B cell (primary cell): ENCODE measurements at regions of chr21 and their contacts with region 1.

Region 1: GRCh38 chr21:33542640-33543504 is at the start of gene SON:
- DNase-seq: peak; percentile 98
- ATAC-seq: peak; percentile 88
- H3K4me3 ChIP-seq: peak within 1 kb of the TSS; percentile 69 to 99 (median 89)
- H3K4me3 Mint-ChIP-seq: peak within 1 kb of the TSS; percentile 97
- H3K27ac ChIP-seq: peak within 1 kb of the TSS; percentile 96 to 99
- H3K27ac Mint-ChIP-seq: peak within 1 kb of the TSS; percentile 99
- H3K4me1 ChIP-seq: peaks cover 17 to 31% of the 10 kb centered on the region in 2 donors
- H3K4me1 Mint-ChIP-seq: peaks cover 43% of the 10 kb centered on the region
- H3K27me3 ChIP-seq: no peaks in the 10 kb centered on the region
- H3K27me3 Mint-ChIP-seq: no peaks in the 10 kb centered on the region
- CTCF ChIP-seq: no peak
- total RNA-seq, gene SON: 441 and 463 TPM in 2 replicates

Region 2: DNA sequence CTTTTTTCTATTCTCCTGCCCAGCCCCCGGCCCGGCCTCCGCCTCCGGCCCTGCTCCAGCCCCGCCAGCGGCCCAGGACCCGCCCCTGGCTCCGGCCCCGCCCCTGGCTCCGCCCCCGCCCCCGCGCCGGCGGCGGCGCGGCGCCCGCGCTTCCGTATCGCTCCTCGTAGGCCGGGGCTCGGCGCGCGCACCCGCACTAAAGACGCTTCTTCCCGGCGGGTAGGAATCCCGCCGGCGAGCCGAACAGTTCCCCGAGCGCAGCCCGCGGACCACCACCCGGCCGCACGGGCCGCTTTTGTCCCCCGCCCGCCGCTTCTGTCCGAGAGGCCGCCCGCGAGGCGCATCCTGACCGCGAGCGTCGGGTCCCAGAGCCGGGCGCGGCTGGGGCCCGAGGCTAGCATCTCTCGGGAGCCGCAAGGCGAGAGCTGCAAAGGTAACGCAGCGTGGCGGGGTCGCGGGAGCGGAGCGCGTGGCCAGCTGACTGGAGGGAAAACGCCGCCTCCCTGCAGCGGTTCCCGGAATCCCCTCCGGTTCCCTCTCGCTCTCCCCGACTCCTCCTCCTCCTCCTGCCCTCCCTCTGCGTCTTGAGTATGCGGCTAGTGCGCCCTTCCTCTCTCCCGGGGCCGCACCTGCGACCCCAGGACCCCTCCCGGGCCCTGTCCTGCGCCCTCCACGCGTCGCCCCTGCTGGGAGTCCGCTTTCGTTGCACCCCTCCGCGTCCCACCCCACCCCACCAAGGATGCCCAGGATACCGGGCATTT is 312.9 kb before region 1 on chr21 and contains the start of gene IFNAR2:
- CTCF ChIA-PET with region 1: no interaction called
- POLR2A ChIA-PET with region 1: no interaction called
- intact Hi-C with region 1: loop called (anchors 5 kb)
- DNase-seq: peak; percentile 85
- ATAC-seq: peak; percentile 90
- H3K4me3 ChIP-seq: peak within 1 kb of the TSS; percentile 66 to 97 (median 93)
- H3K4me3 Mint-ChIP-seq: peak within 1 kb of the TSS; percentile 92
- H3K27ac ChIP-seq: peak within 1 kb of the TSS; percentile 54 to 84
- H3K27ac Mint-ChIP-seq: peak within 1 kb of the TSS; percentile 89
- H3K4me1 ChIP-seq: peaks cover 30 to 37% of the 10 kb centered on the region in 2 donors
- H3K4me1 Mint-ChIP-seq: peaks cover 43% of the 10 kb centered on the region
- H3K27me3 ChIP-seq: no peaks in the 10 kb centered on the region
- H3K27me3 Mint-ChIP-seq: no peaks in the 10 kb centered on the region
- CTCF ChIP-seq: no peak
- total RNA-seq, gene IFNAR2: 45.0 and 52.2 TPM in 2 replicates

Region 3: GRCh38 chr21:33412832-33413519 is 129.9 kb before region 1 on chr21:
- CTCF ChIA-PET with region 1: no interaction called
- POLR2A ChIA-PET with region 1: no interaction called
- intact Hi-C with region 1: no loop called
- DNase-seq: no peak
- ATAC-seq: peak; percentile 36
- H3K4me3 ChIP-seq: peak overlapping the region in 2 of 5 experiments; percentile 9 to 46
- H3K4me3 Mint-ChIP-seq: peak overlapping the region; percentile 55
- H3K27ac ChIP-seq: peak overlapping the region; percentile 26 to 80
- H3K27ac Mint-ChIP-seq: peak overlapping the region; percentile 89
- H3K4me1 ChIP-seq: peaks cover 27 to 59% of the 10 kb centered on the region in 2 donors
- H3K4me1 Mint-ChIP-seq: peaks cover 59% of the 10 kb centered on the region
- H3K27me3 ChIP-seq: no peaks in the 10 kb centered on the region
- H3K27me3 Mint-ChIP-seq: no peaks in the 10 kb centered on the region
- CTCF ChIP-seq: no peak

Region 4: DNA sequence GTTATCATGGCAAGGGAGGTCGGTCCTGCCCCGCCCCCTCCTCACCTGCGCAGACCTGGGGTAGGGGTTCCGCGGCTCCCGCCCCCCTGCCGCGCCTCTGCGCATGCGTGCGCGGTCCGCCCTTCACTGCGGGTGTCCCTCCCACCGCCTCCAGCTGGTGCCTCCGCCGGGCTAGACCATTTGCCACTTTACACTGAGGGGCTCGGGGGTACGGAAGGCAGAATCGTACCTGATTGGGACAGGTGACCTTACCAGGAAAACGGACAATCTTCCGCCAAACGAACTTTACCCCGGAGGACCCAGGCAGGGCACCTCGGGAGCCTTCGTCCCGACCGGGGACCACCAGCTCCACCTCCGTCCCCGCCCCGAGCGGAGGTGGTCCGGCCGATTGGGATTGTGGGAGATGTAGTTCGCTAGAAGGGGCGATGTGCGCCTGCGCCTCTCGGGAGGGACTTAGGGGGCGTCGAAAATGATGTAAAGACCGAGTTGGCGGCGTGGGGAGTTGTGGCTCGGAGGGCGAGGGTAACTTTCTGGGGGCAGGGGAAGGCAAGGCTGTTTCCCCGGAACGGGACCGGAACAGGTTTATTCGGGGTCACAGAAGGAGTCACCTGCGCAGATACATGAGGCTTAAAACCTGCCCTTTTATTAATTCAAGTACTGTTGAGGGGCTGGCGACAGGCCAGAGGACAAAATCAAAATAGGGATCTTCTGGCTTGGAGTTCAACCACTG is 51.3 kb before region 1 on chr21 and contains the start of gene DNAJC28:
- CTCF ChIA-PET with region 1: no interaction called
- POLR2A ChIA-PET with region 1: interaction called, 5 read pairs
- intact Hi-C with region 1: loop called (anchors 1 kb)
- DNase-seq: peak; percentile 98
- ATAC-seq: peak; percentile 97
- H3K4me3 ChIP-seq: peak within 1 kb of the TSS; percentile 65 to 87 (median 80)
- H3K4me3 Mint-ChIP-seq: peak within 1 kb of the TSS; percentile 87
- H3K27ac ChIP-seq: peak within 1 kb of the TSS; percentile 29 to 62
- H3K27ac Mint-ChIP-seq: peak within 1 kb of the TSS; percentile 87
- H3K4me1 ChIP-seq: peaks cover 0 to 9% of the 10 kb centered on the region in 2 donors
- H3K4me1 Mint-ChIP-seq: peaks cover 10% of the 10 kb centered on the region
- H3K27me3 ChIP-seq: no peaks in the 10 kb centered on the region
- H3K27me3 Mint-ChIP-seq: no peaks in the 10 kb centered on the region
- CTCF ChIP-seq: no peak
- total RNA-seq, gene DNAJC28: 2.4 and 2.5 TPM in 2 replicates

Region 5: DNA sequence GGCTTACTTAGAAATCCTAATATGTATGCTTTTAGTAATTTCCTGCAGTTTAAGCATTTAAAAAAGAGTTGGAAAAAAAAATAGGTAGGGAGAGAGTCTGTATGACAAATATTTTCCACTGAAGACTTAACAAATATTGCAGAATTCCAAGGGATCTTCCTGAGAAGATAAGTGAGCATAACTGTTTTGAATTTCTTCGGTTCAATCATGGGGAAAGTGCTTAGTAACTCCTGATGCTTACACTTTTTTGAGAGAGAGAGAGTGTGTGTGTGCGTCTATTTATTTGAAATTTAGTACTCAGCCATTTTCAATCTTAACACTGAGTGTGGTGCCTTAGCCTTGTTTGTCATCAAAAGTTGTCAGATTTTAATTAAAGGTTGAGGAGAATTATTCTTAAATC is 18.5 kb after region 1 on chr21:
- CTCF ChIA-PET with region 1: interaction called, 3 read pairs
- POLR2A ChIA-PET with region 1: no interaction called
- intact Hi-C with region 1: loop called (anchors 2 kb)
- DNase-seq: no peak
- ATAC-seq: no peak
- H3K4me3 ChIP-seq: no peak overlapping the region
- H3K4me3 Mint-ChIP-seq: no peak overlapping the region
- H3K27ac ChIP-seq: no peak overlapping the region
- H3K27ac Mint-ChIP-seq: no peak overlapping the region
- H3K4me1 ChIP-seq: no peaks in the 10 kb centered on the region
- H3K4me1 Mint-ChIP-seq: peaks cover 17% of the 10 kb centered on the region
- H3K27me3 ChIP-seq: no peaks in the 10 kb centered on the region
- H3K27me3 Mint-ChIP-seq: no peaks in the 10 kb centered on the region
- CTCF ChIP-seq: no peak

Region 6: GRCh38 chr21:34614633-34615486 is 1072.0 kb after region 1 on chr21 and contains the start of gene RCAN1:
- CTCF ChIA-PET with region 1: no interaction called
- POLR2A ChIA-PET with region 1: no interaction called
- intact Hi-C with region 1: loop called (anchors 5 kb)
- DNase-seq: peak; percentile 94
- ATAC-seq: peak; percentile 95
- H3K4me3 ChIP-seq: peak within 1 kb of the TSS; percentile 41 to 74 (median 59)
- H3K4me3 Mint-ChIP-seq: peak within 1 kb of the TSS; percentile 91
- H3K27ac ChIP-seq: peak within 1 kb of the TSS in 1 of 2 donors; percentile 71
- H3K27ac Mint-ChIP-seq: peak within 1 kb of the TSS; percentile 84
- H3K4me1 ChIP-seq: peaks cover 9 to 11% of the 10 kb centered on the region in 2 donors
- H3K4me1 Mint-ChIP-seq: peaks cover 16% of the 10 kb centered on the region
- H3K27me3 ChIP-seq: peaks cover 0 to 7% (median 0%) of the 10 kb centered on the region in 4 experiments
- H3K27me3 Mint-ChIP-seq: peaks cover 15% of the 10 kb centered on the region
- CTCF ChIP-seq: no peak
- total RNA-seq, gene RCAN1: 4.2 and 4.4 TPM in 2 replicates